Activated naive CD4-positive, alpha-beta T cell treated with anti-CD3 and anti-CD28 coated beads, Interleukin-2, amount 10 ng/mL, durations not matched to agents 7 days and 5 days (primary cell): ENCODE measurements at regions of chr1 and their contacts with region 1.

Region 1: DNA sequence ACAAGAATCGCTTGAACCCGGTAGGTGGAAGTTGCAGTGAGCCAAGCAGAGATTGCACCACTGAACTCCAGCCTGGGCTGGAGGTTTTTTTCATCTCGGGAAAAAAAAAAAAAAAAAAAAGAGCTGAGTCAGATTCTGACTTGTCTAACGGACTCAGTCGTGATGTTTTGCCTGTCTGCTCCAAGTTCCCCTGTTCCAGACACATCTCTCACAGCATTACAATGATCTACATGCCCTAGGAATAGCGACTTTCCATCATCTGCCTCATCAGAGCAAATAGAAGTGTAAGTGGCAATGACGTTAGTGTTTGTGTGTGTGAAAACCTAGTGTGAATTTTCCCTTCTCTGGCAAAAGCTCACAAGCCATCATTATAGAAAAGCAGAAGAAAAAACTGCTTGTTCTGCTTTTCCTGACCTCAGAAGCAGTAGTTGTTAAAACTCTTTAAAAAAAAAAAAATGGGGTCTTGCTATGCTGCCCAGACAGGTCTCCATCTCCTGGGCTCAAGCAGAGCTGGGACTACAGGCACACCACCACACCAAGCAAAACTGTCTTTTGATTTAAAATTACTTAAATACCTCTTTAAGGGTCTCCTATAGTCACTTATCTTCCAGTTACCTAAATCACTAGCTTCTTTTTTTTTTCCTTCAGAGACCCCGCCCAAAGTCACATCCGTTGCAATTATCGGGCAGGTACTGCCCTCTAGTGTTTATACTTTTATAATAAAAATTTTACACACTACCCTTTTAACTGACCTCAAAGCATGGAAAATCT is 37.3 kb downstream of the PLEKHO1 start:
- DNase-seq: peak; percentile 28
- H3K4me3 Mint-ChIP-seq: no peak overlapping the region
- H3K27ac Mint-ChIP-seq: no peak overlapping the region
- H3K4me1 Mint-ChIP-seq: peaks cover 18% of the 10 kb centered on the region
- H3K27me3 Mint-ChIP-seq: peaks cover 21% of the 10 kb centered on the region

Region 2: GRCh38 chr1:149886396-149887195 is 300.4 kb before region 1 on chr1:
- CTCF ChIA-PET with region 1: interaction called, 20 read pairs
- DNase-seq: peak; percentile 90
- H3K4me3 Mint-ChIP-seq: no peak overlapping the region
- H3K27ac Mint-ChIP-seq: no peak overlapping the region
- H3K4me1 Mint-ChIP-seq: peaks cover 18% of the 10 kb centered on the region
- H3K27me3 Mint-ChIP-seq: no peaks in the 10 kb centered on the region

Region 3: GRCh38 chr1:150056407-150056806 is 130.6 kb before region 1 on chr1:
- CTCF ChIA-PET with region 1: interaction called, 10 read pairs
- DNase-seq: no peak
- H3K4me3 Mint-ChIP-seq: no peak overlapping the region
- H3K27ac Mint-ChIP-seq: no peak overlapping the region
- H3K4me1 Mint-ChIP-seq: no peaks in the 10 kb centered on the region
- H3K27me3 Mint-ChIP-seq: peaks cover 22% of the 10 kb centered on the region

Region 4: GRCh38 chr1:150072959-150073358 is 114.0 kb before region 1 on chr1:
- CTCF ChIA-PET with region 1: interaction called, 37 read pairs
- DNase-seq: no peak
- H3K4me3 Mint-ChIP-seq: no peak overlapping the region
- H3K27ac Mint-ChIP-seq: peak overlapping the region; percentile 46
- H3K4me1 Mint-ChIP-seq: peaks cover 51% of the 10 kb centered on the region
- H3K27me3 Mint-ChIP-seq: no peaks in the 10 kb centered on the region

Region 5: DNA sequence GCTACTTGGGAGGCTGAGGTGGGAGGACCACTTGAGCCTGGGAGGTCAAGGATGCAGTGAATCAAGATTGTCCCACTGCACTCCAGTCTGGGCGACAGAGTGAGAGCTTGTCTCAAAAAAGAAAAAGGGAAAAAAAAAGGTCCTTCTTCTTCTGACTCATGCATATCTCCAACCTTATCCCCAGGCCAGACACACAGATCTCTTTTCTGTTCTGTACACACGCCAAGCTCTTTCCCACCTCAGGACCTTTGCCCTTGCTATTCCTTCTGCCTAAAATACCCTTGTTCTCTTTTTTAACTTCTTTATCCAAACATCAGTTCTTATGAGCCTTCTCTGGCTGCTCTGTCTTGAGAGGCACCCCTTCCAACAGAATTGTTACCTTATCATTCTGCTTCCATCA is 15.2 kb before region 1 on chr1:
- CTCF ChIA-PET with region 1: interaction called, 11 read pairs
- DNase-seq: no peak
- H3K4me3 Mint-ChIP-seq: no peak overlapping the region
- H3K27ac Mint-ChIP-seq: no peak overlapping the region
- H3K4me1 Mint-ChIP-seq: no peaks in the 10 kb centered on the region
- H3K27me3 Mint-ChIP-seq: peaks cover under 1% of the 10 kb centered on the region